ENCODE measurements at regions of chr15 and their contacts with region 1.

Region 1: GRCh38 chr15:39756806-39757522 is 25.7 kb downstream of the FSIP1 start:
- DNase-seq: peak in 6 of 9 donors; percentile 29 to 50 (median 40)
- ATAC-seq: no peak
- H3K4me3 ChIP-seq: no peak overlapping the region
- H3K4me3 Mint-ChIP-seq: no peak overlapping the region
- H3K27ac ChIP-seq: no peak overlapping the region
- H3K27ac Mint-ChIP-seq: no peak overlapping the region
- H3K4me1 ChIP-seq: no peaks in the 10 kb centered on the region
- H3K4me1 Mint-ChIP-seq: no peaks in the 10 kb centered on the region
- H3K27me3 ChIP-seq: no peaks in the 10 kb centered on the region
- H3K27me3 Mint-ChIP-seq: peaks cover 0 to 58% (median 5%) of the 10 kb centered on the region in 5 donors

Region 2: DNA sequence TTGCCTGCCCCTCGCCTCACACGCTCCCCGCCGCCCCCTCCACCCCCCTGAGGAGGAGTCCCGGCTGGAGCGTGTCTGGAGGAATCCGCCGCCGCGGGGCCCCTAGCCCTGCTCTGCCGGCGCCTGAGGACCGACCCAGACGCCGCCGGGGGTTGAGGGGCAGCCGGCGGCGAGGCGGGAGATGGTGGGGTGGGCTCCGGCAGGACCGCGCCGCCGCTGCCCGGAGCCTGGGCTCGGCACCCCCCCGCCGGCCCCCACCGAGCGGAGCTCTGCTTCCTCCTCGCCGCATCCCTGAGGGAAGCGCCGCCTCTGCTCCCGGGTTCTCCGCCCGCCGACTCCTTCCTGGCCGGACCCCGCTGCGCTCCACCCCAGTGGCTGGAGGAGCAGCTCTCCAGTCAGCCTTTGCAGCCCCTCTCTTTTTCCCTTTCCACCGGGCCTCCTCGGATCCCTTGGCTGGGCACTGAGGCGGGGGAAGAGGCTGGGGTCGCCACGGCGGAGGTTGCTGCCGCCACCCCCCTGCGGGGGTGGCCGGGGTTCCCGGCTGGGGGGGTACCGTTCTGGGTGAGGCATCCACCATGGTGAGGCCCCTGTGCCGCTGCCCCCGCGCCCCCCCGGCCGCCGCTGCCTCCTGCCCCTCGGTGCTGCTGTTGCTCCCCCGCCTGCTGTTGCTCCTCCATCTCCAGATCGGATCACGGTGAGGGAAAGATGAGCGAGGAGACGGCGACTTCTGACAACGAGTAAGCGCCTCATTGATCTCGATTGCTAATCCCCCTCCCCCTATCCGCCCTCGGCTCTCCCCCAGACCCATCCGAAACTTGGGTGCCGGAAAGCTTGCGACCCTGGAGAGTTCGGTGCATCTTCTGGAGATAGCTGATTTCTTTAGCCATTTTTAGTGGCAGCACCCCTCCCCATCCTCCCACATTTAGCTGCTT is 1504.2 kb before region 1 on chr15 and contains the start of gene SPRED1:
- CTCF ChIA-PET with region 1: no interaction called
- POLR2A ChIA-PET with region 1: no interaction called
- intact Hi-C with region 1: loop called in 1 of 2 experiments (anchors 10 kb)
- DNase-seq: peak in 8 of 9 donors; percentile 8 to 28 (median 9)
- ATAC-seq: peak; percentile 12
- H3K4me3 ChIP-seq: peak within 1 kb of the TSS; percentile 78
- H3K4me3 Mint-ChIP-seq: peak within 1 kb of the TSS; percentile 80 to 97 (median 90)
- H3K27ac ChIP-seq: no peak within 1 kb of the TSS
- H3K27ac Mint-ChIP-seq: peak within 1 kb of the TSS in 8 of 9 donors; percentile 26 to 88 (median 64)
- H3K4me1 ChIP-seq: peaks cover 17 to 19% of the 10 kb centered on the region in 2 donors
- H3K4me1 Mint-ChIP-seq: peaks cover 25 to 36% (median 27%) of the 10 kb centered on the region in 7 donors
- H3K27me3 ChIP-seq: no peaks in the 10 kb centered on the region
- H3K27me3 Mint-ChIP-seq: peaks cover 18 to 73% (median 43%) of the 10 kb centered on the region in 5 donors
- total RNA-seq, gene SPRED1: 0.07 to 2.6 (median 0.95) TPM

Region 3: DNA sequence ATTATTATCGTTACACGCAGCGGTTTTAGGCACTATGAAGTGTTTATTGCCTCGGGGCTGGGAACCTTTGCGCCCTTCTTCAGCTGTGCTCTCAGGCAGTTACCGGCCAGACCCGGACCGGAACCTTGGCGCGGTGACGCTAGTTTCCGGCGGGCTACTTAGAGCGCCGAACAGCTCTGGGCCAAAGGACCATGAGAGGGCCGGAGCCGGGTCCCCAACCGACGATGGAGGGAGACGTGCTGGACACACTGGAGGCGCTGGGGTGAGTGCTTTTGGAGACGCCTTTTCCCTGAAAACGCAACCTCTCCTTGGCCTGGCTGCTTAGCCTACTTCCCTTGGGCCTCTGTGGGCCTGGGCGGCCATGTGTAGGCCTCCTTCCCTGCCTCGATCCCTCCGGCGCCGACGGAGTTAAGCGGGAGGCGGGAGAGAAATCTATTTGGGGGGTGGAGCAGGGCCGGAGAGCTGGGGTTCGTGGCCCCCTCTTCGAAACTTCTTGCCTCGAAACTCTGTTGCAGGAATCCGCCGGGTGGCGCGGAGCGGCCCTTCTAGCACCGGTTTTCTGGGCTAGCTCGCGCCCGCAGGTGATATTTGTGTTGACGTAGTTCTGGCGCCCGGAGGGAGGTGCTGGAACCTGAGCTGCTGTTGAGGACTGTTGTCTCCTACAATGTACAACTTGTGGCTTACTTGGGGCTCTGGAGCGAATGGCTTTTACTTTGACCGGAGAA is 1302.8 kb before region 1 on chr15 and contains the start of gene FAM98B:
- CTCF ChIA-PET with region 1: no interaction called
- POLR2A ChIA-PET with region 1: no interaction called
- intact Hi-C with region 1: no loop called
- DNase-seq: peak; percentile 73 to 94 (median 82)
- ATAC-seq: peak; percentile 92
- H3K4me3 ChIP-seq: peak within 1 kb of the TSS; percentile 98
- H3K4me3 Mint-ChIP-seq: peak within 1 kb of the TSS; percentile 86 to 99 (median 96)
- H3K27ac ChIP-seq: peak within 1 kb of the TSS; percentile 95
- H3K27ac Mint-ChIP-seq: peak within 1 kb of the TSS; percentile 92 to 99 (median 95)
- H3K4me1 ChIP-seq: peaks cover 13 to 22% of the 10 kb centered on the region in 2 donors
- H3K4me1 Mint-ChIP-seq: peaks cover 24 to 46% (median 36%) of the 10 kb centered on the region in 7 donors
- H3K27me3 ChIP-seq: no peaks in the 10 kb centered on the region
- H3K27me3 Mint-ChIP-seq: peaks cover 0 to 19% (median 0%) of the 10 kb centered on the region in 5 donors
- total RNA-seq, gene FAM98B: 16.2 to 39.5 (median 27.6) TPM

Region 4: GRCh38 chr15:38707802-38708671 is 1048.9 kb before region 1 on chr15:
- CTCF ChIA-PET with region 1: no interaction called
- POLR2A ChIA-PET with region 1: no interaction called
- intact Hi-C with region 1: loop called (anchors 1 to 2 kb)
- DNase-seq: peak in 5 of 9 donors; percentile 36 to 60 (median 51)
- ATAC-seq: peak; percentile 84
- H3K4me3 ChIP-seq: no peak overlapping the region
- H3K4me3 Mint-ChIP-seq: no peak overlapping the region
- H3K27ac ChIP-seq: no peak overlapping the region
- H3K27ac Mint-ChIP-seq: no peak overlapping the region
- H3K4me1 ChIP-seq: no peaks in the 10 kb centered on the region
- H3K4me1 Mint-ChIP-seq: peaks cover 0 to 25% (median 0%) of the 10 kb centered on the region in 7 donors
- H3K27me3 ChIP-seq: no peaks in the 10 kb centered on the region
- H3K27me3 Mint-ChIP-seq: peaks cover 0 to 23% (median 0%) of the 10 kb centered on the region in 5 donors

Region 5: DNA sequence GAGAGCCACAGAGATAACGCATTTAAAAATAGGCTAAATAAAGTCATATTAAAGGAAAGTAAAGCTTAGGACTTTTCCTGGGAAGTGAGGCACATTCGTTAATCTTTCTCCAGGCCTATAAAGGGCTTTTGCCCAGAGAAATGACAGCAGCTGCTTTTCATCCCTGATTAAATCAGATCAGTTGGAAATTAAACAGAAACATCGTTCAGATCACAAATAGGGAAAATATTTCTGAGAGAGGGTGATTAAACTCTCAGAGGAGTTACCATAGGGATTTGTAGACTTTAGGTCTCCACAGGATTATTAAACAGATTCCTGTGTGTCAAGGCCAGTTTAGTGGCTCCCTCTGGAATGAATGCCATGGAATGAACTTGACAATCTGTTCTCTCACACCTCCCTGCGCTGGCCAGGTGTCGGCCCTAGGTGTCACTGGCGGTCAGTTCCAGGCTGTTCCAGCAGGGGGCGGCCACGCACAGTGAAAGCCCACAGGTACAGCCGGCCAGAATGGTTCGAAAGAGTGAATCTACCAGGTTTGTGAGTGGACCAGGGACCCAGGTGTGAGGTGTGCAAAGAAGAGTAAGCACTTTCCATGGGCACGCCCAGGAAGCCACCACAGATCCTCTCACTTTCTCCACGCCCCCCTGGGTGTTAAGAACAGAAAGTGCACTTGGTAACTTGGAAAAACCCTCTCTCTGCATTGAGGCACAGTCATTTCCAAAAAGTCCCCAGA is 939.4 kb before region 1 on chr15:
- CTCF ChIA-PET with region 1: interaction called, 3 read pairs
- POLR2A ChIA-PET with region 1: no interaction called
- intact Hi-C with region 1: loop called (anchors 1 to 5 kb)
- DNase-seq: peak; percentile 43 to 84 (median 72)
- ATAC-seq: peak; percentile 93
- H3K4me3 ChIP-seq: no peak overlapping the region
- H3K4me3 Mint-ChIP-seq: peak overlapping the region in 3 of 10 donors; percentile 13 to 39 (median 30)
- H3K27ac ChIP-seq: no peak overlapping the region
- H3K27ac Mint-ChIP-seq: no peak overlapping the region
- H3K4me1 ChIP-seq: no peaks in the 10 kb centered on the region
- H3K4me1 Mint-ChIP-seq: peaks cover 0 to 5% (median 0%) of the 10 kb centered on the region in 7 donors
- H3K27me3 ChIP-seq: no peaks in the 10 kb centered on the region
- H3K27me3 Mint-ChIP-seq: peaks cover 0 to 15% (median 13%) of the 10 kb centered on the region in 5 donors

Region 6: DNA sequence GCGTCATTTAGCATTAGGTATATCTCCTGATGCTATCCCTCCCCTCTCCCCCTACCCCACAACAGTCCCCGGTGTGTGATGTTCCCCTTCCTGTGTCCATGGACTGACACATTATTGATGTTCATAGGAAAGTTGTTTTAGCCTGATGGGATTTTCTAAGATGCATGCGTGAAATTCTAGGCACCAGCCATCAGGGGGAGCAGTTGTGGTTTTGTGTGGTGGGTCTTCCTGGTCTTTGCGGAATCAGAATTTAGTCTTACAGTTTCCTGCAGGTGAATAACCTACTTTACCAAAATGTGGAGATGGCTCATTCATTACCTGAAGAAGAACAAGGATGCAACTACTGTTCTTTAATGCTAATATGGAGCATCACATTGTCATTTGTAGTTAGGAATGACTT is 631.1 kb before region 1 on chr15:
- CTCF ChIA-PET with region 1: interaction called, 4 read pairs
- POLR2A ChIA-PET with region 1: no interaction called
- intact Hi-C with region 1: loop called in 1 of 2 experiments (anchors 10 kb)
- DNase-seq: peak in 6 of 9 donors; percentile 2 to 36 (median 8)
- ATAC-seq: no peak
- H3K4me3 ChIP-seq: no peak overlapping the region
- H3K4me3 Mint-ChIP-seq: no peak overlapping the region
- H3K27ac ChIP-seq: no peak overlapping the region
- H3K27ac Mint-ChIP-seq: no peak overlapping the region
- H3K4me1 ChIP-seq: no peaks in the 10 kb centered on the region
- H3K4me1 Mint-ChIP-seq: peaks cover 0 to 22% (median 0%) of the 10 kb centered on the region in 7 donors
- H3K27me3 ChIP-seq: no peaks in the 10 kb centered on the region
- H3K27me3 Mint-ChIP-seq: peaks cover 4 to 23% (median 19%) of the 10 kb centered on the region in 5 donors

Region 7: GRCh38 chr15:39580117-39580484 is 176.9 kb before region 1 on chr15:
- CTCF ChIA-PET with region 1: no interaction called
- POLR2A ChIA-PET with region 1: no interaction called
- intact Hi-C with region 1: loop called (anchors 1 to 2 kb)
- DNase-seq: peak; percentile 23 to 91 (median 63)
- ATAC-seq: peak; percentile 92
- H3K4me3 ChIP-seq: peak overlapping the region; percentile 26
- H3K4me3 Mint-ChIP-seq: peak overlapping the region in 7 of 10 donors; percentile 16 to 82 (median 64)
- H3K27ac ChIP-seq: no peak overlapping the region
- H3K27ac Mint-ChIP-seq: no peak overlapping the region
- H3K4me1 ChIP-seq: peaks cover 0 to 11% of the 10 kb centered on the region in 2 donors
- H3K4me1 Mint-ChIP-seq: peaks cover 0 to 31% (median 14%) of the 10 kb centered on the region in 7 donors
- H3K27me3 ChIP-seq: peaks cover 0 to 5% of the 10 kb centered on the region in 2 donors
- H3K27me3 Mint-ChIP-seq: peaks cover 53 to 74% (median 66%) of the 10 kb centered on the region in 5 donors

Region 8: GRCh38 chr15:39594056-39594763 is 162.8 kb before region 1 on chr15:
- CTCF ChIA-PET with region 1: no interaction called
- POLR2A ChIA-PET with region 1: no interaction called
- intact Hi-C with region 1: loop called in 1 of 2 experiments (anchors 1 kb)
- DNase-seq: no peak
- ATAC-seq: no peak
- H3K4me3 ChIP-seq: no peak overlapping the region
- H3K4me3 Mint-ChIP-seq: peak overlapping the region in 1 of 10 donors; percentile 47
- H3K27ac ChIP-seq: no peak overlapping the region
- H3K27ac Mint-ChIP-seq: no peak overlapping the region
- H3K4me1 ChIP-seq: no peaks in the 10 kb centered on the region
- H3K4me1 Mint-ChIP-seq: peaks cover 0 to 7% (median 0%) of the 10 kb centered on the region in 7 donors
- H3K27me3 ChIP-seq: no peaks in the 10 kb centered on the region
- H3K27me3 Mint-ChIP-seq: peaks cover 0 to 25% (median 0%) of the 10 kb centered on the region in 5 donors

Region 9: DNA sequence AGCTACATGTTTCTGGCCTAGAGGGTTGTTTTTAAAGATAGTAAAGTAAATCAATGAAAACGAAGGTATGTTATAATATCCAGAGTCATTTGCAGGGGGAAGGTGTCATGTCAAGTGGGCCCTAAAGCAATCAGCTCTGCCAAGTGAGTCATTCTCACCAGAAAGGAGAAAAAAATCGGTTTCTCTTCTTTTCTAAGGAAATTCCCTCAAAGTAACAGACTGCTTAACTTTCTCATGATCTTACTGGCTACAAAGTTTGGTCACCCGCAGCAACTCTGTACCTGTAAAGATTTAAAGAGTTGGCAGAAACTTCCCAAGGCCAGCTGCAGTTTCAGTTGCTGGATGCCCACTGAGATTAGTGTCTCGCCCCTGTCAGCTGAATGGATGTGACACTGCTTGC is 31.1 kb after region 1 on chr15:
- CTCF ChIA-PET with region 1: no interaction called
- POLR2A ChIA-PET with region 1: no interaction called
- intact Hi-C with region 1: no loop called
- DNase-seq: no peak
- ATAC-seq: no peak
- H3K4me3 ChIP-seq: no peak overlapping the region
- H3K4me3 Mint-ChIP-seq: no peak overlapping the region
- H3K27ac ChIP-seq: no peak overlapping the region
- H3K27ac Mint-ChIP-seq: peak overlapping the region in 1 of 9 donors; percentile 49
- H3K4me1 ChIP-seq: peaks cover 11% of the 10 kb centered on the region in 2 donors
- H3K4me1 Mint-ChIP-seq: peaks cover 23 to 44% (median 35%) of the 10 kb centered on the region in 7 donors
- H3K27me3 ChIP-seq: no peaks in the 10 kb centered on the region
- H3K27me3 Mint-ChIP-seq: peaks cover 0 to 7% (median 0%) of the 10 kb centered on the region in 5 donors

Measured in naive thymus-derived CD4-positive, alpha-beta T cell (primary cell).